Activated B cell treated with CpG ODN at 0.5 μM for 24 hours (primary cell): ENCODE measurements at regions of chr11 and their contacts with region 1.

Region 1: GRCh38 chr11:103682318-103683184 is 353.9 kb upstream of the DDI1 start:
- DNase-seq: peak; percentile 21
- ATAC-seq: peak; percentile 75
- H3K4me3 Mint-ChIP-seq: no peak overlapping the region
- H3K27ac Mint-ChIP-seq: no peak overlapping the region
- H3K4me1 Mint-ChIP-seq: peaks cover 5% of the 10 kb centered on the region
- H3K27me3 Mint-ChIP-seq: no peaks in the 10 kb centered on the region
- CTCF ChIP-seq: no peak

Region 2: GRCh38 chr11:103471546-103471945 is 211.0 kb before region 1 on chr11:
- CTCF ChIA-PET with region 1: no interaction called
- POLR2A ChIA-PET with region 1: no interaction called
- intact Hi-C with region 1: no loop called
- DNase-seq: no peak
- ATAC-seq: no peak
- H3K4me3 Mint-ChIP-seq: no peak overlapping the region
- H3K27ac Mint-ChIP-seq: no peak overlapping the region
- H3K4me1 Mint-ChIP-seq: no peaks in the 10 kb centered on the region
- H3K27me3 Mint-ChIP-seq: no peaks in the 10 kb centered on the region
- CTCF ChIP-seq: no peak

Region 3: DNA sequence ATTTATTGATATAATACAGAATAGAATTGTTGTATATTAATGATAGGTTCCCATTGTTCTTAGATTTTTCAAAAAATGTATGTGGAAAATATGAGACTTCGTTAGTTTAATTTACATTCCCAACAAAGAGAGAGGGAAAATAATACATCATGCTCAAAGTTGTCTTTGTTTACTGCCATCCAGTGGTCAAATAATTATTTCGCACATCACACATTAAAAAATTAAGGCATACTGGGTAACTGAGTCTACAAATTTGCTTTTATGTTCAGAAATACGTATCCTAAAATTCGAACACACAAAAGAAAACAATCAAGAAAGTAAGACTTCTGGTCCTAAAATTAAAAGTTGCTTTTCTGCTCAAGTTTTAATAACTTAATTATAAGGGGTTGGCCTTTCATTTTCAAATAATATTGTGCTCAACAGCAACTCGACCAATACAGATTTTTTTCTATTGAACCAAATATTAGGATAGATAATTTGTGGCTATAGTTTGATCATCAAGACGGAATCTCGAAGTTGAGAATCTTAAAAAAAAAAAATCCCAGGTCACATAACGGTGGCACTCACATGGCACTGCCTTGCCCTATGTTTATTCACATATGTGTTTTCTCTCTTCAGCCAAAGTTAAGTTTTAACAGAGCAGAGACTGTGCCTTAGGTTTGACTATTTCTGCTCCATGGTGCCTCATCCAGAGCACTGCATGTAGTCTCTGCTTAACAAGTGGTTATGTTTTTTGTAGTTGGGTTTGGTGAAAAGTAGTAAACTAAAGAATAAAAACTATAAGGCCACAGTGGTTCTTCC is 469.1 kb after region 1 on chr11:
- CTCF ChIA-PET with region 1: interaction called, 11 read pairs
- POLR2A ChIA-PET with region 1: no interaction called
- intact Hi-C with region 1: loop called (anchors 1 kb)
- DNase-seq: no peak
- ATAC-seq: no peak
- H3K4me3 Mint-ChIP-seq: no peak overlapping the region
- H3K27ac Mint-ChIP-seq: no peak overlapping the region
- H3K4me1 Mint-ChIP-seq: peaks cover 9% of the 10 kb centered on the region
- H3K27me3 Mint-ChIP-seq: no peaks in the 10 kb centered on the region
- CTCF ChIP-seq: no peak

Region 4: DNA sequence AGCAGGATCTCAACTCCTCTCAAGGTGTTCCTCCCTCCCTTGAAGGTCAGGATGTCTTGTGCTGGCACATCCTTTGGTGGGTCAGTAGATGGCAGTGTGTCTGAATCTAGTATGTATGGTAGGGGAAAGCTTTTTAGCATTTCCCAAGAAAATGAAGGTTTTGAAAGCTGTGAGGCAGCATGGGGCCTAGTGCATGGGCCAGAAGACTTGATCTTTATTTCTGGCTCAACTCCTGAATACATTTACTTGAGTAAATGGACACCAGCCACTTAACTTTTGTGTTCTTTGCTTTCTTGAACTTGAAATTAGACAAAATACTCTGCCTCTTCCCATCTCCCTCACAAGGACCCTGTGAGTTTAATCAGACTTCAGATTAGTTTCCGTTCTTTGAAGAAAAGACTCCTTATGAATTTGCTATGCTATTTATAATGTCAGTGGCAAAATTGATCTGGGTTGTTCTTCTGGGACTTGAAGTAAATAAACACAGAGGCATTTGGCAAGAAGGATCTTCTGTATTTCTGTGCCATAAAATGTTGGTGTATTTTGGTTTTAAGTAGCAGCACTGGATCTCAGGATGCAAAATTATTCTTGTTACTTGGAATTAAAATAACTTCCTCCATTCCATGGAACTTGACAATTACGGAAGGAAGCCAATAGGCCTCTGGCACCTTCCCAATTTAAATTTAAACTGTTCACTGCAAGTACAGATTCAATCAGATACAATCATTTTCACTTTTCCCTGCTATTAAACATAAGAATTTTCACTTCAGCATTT is 926.9 kb after region 1 on chr11:
- CTCF ChIA-PET with region 1: interaction called, 3 read pairs
- POLR2A ChIA-PET with region 1: no interaction called
- intact Hi-C with region 1: loop called (anchors 1 kb)
- DNase-seq: no peak
- ATAC-seq: peak; percentile 77
- H3K4me3 Mint-ChIP-seq: no peak overlapping the region
- H3K27ac Mint-ChIP-seq: no peak overlapping the region
- H3K4me1 Mint-ChIP-seq: no peaks in the 10 kb centered on the region
- H3K27me3 Mint-ChIP-seq: peaks cover 2% of the 10 kb centered on the region
- CTCF ChIP-seq: no peak